ENCODE measurements at regions of chr13 and their contacts with region 1.

Region 1: GRCh38 chr13:99577934-99578917 is 77.0 kb downstream of the TM9SF2 start:
- DNase-seq: peak; percentile 20
- ATAC-seq: peak; percentile 74
- H3K4me3 ChIP-seq: no peak overlapping the region
- H3K27ac ChIP-seq: no peak overlapping the region
- H3K4me1 ChIP-seq: no peaks in the 10 kb centered on the region
- H3K27me3 ChIP-seq: no peaks in the 10 kb centered on the region
- CTCF ChIP-seq: peak; percentile 43

Region 2: DNA sequence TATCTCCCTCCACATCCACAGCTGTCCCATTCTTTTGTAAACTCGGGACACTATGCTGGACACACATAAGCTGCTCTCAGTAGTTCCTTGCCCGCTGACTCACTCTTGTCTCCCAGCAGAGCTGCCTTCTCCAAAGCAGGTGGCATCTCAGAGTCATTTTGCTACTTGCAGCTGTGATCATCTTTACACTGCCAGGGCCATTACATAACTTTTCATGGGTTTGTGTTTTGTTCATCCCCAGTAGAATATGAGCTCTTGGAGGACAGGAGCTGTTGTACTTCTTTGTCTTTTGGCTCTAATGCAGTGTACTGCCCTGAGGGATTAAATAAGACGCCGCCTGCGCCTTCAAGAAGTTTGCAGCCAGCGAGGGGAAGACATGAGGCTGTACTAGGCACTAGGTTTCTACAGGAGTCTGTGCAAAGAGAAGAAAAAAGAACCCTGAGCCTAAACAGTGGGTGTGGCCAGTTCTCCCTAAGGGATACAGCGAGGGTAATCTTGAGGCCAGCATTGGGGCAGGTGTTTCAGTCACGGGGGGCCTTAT is 230.2 kb before region 1 on chr13:
- CTCF ChIA-PET with region 1: no interaction called
- POLR2A ChIA-PET with region 1: interaction called, 11 read pairs
- intact Hi-C with region 1: no loop called
- DNase-seq: no peak
- ATAC-seq: no peak
- H3K4me3 ChIP-seq: no peak overlapping the region
- H3K27ac ChIP-seq: no peak overlapping the region
- H3K4me1 ChIP-seq: no peaks in the 10 kb centered on the region
- H3K27me3 ChIP-seq: no peaks in the 10 kb centered on the region
- CTCF ChIP-seq: no peak